Testis (tissue), 5 donors: ENCODE measurements at regions of chr11 and their contacts with region 1.

Region 1: DNA sequence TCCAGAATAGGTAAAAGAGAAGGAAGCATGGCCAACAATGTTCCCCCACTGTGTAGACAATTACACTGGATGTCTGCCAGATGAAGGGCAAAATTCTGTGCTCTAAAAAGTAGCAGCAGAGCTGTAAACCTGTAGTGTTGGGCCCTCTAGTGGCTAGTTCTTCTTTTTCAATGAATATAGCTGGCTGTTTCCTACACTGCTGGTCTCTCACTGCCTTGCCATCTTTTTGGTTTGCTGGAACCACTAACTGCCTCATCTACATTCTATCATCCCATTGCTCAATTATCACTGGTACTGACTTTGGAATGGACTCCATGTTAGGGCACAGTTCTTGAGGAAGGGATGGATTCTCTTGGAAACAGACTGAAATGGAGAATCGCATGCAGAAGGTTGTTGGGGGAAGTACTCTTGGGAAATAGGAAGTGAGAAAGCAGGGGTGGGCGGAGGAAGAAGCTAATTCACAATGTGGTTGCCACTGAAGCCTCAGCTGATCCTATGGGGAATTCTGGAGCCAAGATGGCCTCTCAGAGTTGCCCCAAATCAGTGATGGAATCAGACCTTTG is 17.9 kb downstream of the KCNE3 start:
- DNase-seq: peak; percentile 60
- H3K4me3 ChIP-seq: no peak overlapping the region
- H3K27ac ChIP-seq: no peak overlapping the region
- H3K4me1 ChIP-seq: no peaks in the 10 kb centered on the region
- H3K27me3 ChIP-seq: no peaks in the 10 kb centered on the region
- CTCF ChIP-seq: peak; percentile 58 to 82 (median 67)
- POLR2A ChIP-seq: no peak

Region 2: GRCh38 chr11:74255741-74256369 is 193.6 kb before region 1 on chr11:
- intact Hi-C with region 1: loop called (anchors 10 kb)
- DNase-seq: peak; percentile 61
- H3K4me3 ChIP-seq: no peak overlapping the region
- H3K27ac ChIP-seq: no peak overlapping the region
- H3K4me1 ChIP-seq: peaks cover 7% of the 10 kb centered on the region
- H3K27me3 ChIP-seq: no peaks in the 10 kb centered on the region
- CTCF ChIP-seq: peak; percentile 65 to 93 (median 87)
- POLR2A ChIP-seq: no peak

Region 3: DNA sequence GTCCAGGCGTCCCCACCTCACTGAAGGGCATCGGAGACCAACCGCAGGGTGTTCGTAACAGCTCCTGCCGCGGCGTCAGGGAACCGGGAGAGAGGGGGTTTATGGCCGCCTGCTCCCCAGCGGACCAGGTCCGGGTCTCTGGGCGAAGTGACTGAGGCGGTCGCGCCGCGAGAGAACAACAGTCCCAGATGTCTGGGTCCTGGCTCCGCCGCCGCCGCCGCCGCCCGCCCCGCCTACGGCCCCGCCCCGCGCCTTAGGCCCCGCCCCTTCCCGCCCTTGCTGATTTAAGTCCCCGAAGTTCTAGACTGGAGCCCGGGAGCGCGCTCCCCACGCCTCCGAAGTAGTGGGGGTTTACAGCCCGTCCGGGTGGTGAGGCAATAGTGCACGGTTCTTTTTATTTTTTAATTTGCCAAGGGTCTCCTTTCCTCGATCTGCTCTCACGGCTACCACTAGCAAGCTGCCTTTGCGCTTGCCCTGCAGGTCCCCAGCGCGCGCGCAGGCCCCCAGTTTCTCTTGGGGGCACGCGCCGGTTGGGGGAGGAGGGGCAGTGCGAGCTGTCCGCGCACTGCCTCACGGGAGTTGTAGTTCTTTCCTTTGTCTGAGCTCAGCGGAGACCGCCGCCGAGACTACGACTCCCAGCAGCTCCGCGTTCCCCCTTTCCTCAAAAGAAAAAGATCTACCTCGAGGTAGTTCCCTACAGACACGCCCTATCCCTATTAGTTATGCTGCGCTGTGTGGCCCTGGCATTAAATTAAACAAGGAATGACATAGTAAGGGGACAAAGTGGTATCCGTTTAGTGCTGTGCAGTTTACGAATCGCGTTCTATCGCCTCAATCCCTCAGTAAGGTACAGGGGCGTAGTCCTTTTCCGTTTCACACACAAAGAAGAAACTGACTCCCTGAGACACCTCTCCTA is 50.9 kb before region 1 on chr11 and contains the start of gene PGM2L1:
- intact Hi-C with region 1: loop called (anchors 10 kb)
- DNase-seq: peak; percentile 98
- H3K4me3 ChIP-seq: peak within 1 kb of the TSS; percentile 76 to 79
- H3K27ac ChIP-seq: peak within 1 kb of the TSS; percentile 76 to 93
- H3K4me1 ChIP-seq: no peaks in the 10 kb centered on the region
- H3K27me3 ChIP-seq: no peaks in the 10 kb centered on the region
- CTCF ChIP-seq: peak in 1 of 3 experiments; percentile 8
- POLR2A ChIP-seq: no peak
- total RNA-seq, gene PGM2L1: 1.8 to 2.0 TPM

Region 4: GRCh38 chr11:74581954-74582547 is 132.6 kb after region 1 on chr11:
- intact Hi-C with region 1: loop called (anchors 10 kb)
- DNase-seq: no peak
- H3K4me3 ChIP-seq: no peak overlapping the region
- H3K27ac ChIP-seq: no peak overlapping the region
- H3K4me1 ChIP-seq: no peaks in the 10 kb centered on the region
- H3K27me3 ChIP-seq: no peaks in the 10 kb centered on the region
- CTCF ChIP-seq: no peak
- POLR2A ChIP-seq: no peak